ENCODE measurements at regions of chr10 and their contacts with region 1.

Region 1: DNA sequence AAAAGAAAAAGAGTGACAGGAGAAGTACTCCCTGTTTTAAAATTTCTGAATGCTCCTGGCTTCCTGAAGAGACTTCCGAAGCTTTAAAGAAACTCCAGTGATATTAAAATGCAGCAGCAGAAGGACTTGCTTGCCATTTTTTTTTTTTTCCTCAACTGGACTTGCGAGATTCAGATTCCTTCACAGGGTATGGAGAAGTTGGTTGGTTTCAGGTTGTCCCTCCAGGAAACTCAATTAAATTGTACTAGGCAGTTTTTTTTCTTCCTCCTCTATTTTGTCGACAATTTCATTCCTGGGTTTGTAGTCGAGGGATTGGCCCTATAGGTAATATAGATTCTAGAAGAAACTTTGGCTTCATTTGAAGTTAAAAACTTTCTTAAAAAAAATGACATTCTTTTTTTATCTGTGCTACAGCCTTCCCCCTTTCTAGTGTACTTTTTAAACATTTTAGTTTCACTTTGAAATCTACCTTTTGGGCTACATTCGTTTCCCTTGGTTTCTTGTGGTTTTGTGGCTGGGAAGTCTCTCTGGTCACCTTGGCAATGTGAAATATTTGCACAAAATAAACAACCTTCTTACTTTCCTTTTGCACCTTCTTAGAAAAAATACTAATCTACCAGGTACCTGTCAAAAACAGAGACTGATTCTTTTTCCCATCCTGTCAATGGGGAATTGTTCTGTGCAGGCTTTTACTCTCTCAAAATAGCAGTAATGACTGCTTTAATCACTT is 350.1 kb downstream of the GATA3 start:
- DNase-seq: peak; percentile 68
- H3K4me3 Mint-ChIP-seq: peak overlapping the region; percentile 57
- H3K27ac Mint-ChIP-seq: peak overlapping the region; percentile 89
- H3K4me1 Mint-ChIP-seq: peaks cover 68% of the 10 kb centered on the region
- H3K27me3 Mint-ChIP-seq: peaks cover 10% of the 10 kb centered on the region

Region 2: GRCh38 chr10:8065651-8066050 is 338.9 kb before region 1 on chr10:
- intact Hi-C with region 1: loop called (anchors 1 kb)
- DNase-seq: no peak
- H3K4me3 Mint-ChIP-seq: peak overlapping the region; percentile 77
- H3K27ac Mint-ChIP-seq: peak overlapping the region; percentile 88
- H3K4me1 Mint-ChIP-seq: peaks cover 92% of the 10 kb centered on the region
- H3K27me3 Mint-ChIP-seq: peaks cover 2% of the 10 kb centered on the region

Region 3: GRCh38 chr10:8254350-8254749 is 150.2 kb before region 1 on chr10:
- intact Hi-C with region 1: loop called (anchors 1 kb)
- DNase-seq: no peak
- H3K4me3 Mint-ChIP-seq: peak overlapping the region; percentile 38
- H3K27ac Mint-ChIP-seq: peak overlapping the region; percentile 77
- H3K4me1 Mint-ChIP-seq: peaks cover 48% of the 10 kb centered on the region
- H3K27me3 Mint-ChIP-seq: no peaks in the 10 kb centered on the region

Region 4: GRCh38 chr10:8331883-8332729 is 72.5 kb before region 1 on chr10:
- intact Hi-C with region 1: loop called (anchors 1 kb)
- DNase-seq: peak; percentile 78
- H3K4me3 Mint-ChIP-seq: peak overlapping the region; percentile 79
- H3K27ac Mint-ChIP-seq: peak overlapping the region; percentile 75
- H3K4me1 Mint-ChIP-seq: peaks cover 58% of the 10 kb centered on the region
- H3K27me3 Mint-ChIP-seq: peaks cover 6% of the 10 kb centered on the region

Region 5: DNA sequence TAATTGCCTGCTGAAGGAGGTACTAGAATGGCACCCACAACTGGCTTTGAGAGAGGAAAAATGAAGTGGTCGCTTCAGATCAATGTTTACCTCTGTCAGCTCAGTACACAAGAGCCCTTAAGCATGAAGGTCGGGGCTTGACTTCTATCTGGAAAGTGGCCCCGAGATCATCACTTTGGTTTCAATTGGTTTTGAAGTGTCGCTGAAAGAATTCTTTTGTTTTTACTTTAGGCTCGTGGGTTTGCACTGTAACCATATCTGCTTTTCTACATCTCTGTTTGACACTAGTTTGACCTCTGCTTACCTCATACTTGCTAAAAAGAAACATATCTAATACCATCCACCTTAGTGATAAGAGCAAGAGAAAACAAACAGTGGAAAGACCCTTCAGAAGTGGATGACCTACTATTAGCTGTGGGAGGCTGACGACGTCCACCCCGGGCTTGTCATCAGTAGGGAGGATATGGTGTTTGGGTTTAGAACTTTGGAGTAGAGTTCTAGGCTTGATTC is 11.7 kb after region 1 on chr10:
- intact Hi-C with region 1: loop called (anchors 1 kb)
- DNase-seq: peak; percentile 16
- H3K4me3 Mint-ChIP-seq: peak overlapping the region; percentile 9
- H3K27ac Mint-ChIP-seq: peak overlapping the region; percentile 85
- H3K4me1 Mint-ChIP-seq: peaks cover 36% of the 10 kb centered on the region
- H3K27me3 Mint-ChIP-seq: peaks cover 9% of the 10 kb centered on the region

Region 6: DNA sequence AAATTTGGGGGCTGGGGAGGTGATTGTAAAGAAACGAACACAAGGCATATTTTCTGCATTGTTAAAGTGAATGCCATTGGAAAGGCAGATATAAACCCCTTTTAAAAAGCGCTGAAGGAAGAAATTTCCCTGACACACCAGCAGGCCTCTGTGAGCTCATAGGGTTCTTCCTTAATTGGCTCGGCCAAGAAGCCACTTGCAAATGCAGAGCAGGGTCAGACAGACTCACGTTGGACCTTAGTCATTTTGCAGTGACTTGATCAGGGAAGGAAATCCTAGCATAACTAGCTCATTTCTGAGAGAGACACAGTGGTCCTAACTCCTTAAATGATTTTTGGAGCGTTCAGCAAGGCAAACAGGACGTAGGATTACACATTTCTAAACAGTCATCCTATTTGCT is 1111.4 kb after region 1 on chr10:
- intact Hi-C with region 1: no loop called
- DNase-seq: no peak
- H3K4me3 Mint-ChIP-seq: no peak overlapping the region
- H3K27ac Mint-ChIP-seq: no peak overlapping the region
- H3K4me1 Mint-ChIP-seq: no peaks in the 10 kb centered on the region
- H3K27me3 Mint-ChIP-seq: no peaks in the 10 kb centered on the region